ENCODE measurements at regions of chr11 and their contacts with region 1.

Region 1: DNA sequence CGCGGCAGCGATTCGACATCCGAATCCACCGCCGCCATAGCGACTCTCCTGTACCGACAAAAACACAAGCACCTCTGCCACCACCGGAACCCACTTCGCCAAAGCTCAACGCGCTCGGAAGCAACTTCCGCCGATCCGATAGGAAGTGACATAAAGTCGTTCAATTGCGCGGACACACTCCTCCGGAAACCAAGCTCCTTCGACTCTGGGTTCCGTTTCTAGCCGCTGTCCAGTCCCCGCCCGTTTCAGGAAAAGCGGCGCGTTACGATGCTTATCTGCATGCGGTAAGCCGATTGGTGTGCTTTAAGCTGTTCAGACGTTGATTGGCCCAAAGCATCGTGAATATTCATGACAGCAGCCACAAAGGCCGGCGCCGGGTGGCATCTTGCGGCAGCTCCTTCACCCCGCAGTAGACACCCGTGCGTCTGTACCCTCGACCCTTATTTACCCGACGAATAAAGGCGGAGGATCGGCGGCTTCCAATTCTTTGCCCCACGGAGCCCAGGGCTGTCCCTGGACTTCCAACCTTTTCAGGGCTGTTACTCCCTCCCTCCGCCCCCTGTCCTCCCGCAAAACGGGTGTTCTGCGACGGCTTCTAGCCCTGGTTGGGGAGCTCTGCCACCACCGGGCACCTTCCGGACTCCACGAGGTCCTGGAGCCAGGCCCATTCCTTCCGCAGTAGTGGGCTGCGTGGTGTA is at the start of gene TUT1:
- DNase-seq: peak; percentile 99
- ATAC-seq: peak; percentile 92
- H3K4me3 Mint-ChIP-seq: peak within 1 kb of the TSS; percentile 99
- H3K27ac Mint-ChIP-seq: peak within 1 kb of the TSS; percentile 90
- H3K4me1 Mint-ChIP-seq: peaks cover 51% of the 10 kb centered on the region
- H3K27me3 Mint-ChIP-seq: no peaks in the 10 kb centered on the region
- total RNA-seq, gene TUT1: 24.7 to 29.6 TPM

Region 2: GRCh38 chr11:62431171-62431901 is 160.3 kb before region 1 on chr11:
- CTCF ChIA-PET with region 1: no interaction called
- DNase-seq: no peak
- ATAC-seq: no peak
- H3K4me3 Mint-ChIP-seq: no peak overlapping the region
- H3K27ac Mint-ChIP-seq: no peak overlapping the region
- H3K4me1 Mint-ChIP-seq: peaks cover 80% of the 10 kb centered on the region
- H3K27me3 Mint-ChIP-seq: no peaks in the 10 kb centered on the region

Region 3: GRCh38 chr11:62461740-62462507 is 129.7 kb before region 1 on chr11:
- CTCF ChIA-PET with region 1: no interaction called
- DNase-seq: no peak
- ATAC-seq: no peak
- H3K4me3 Mint-ChIP-seq: no peak overlapping the region
- H3K27ac Mint-ChIP-seq: no peak overlapping the region
- H3K4me1 Mint-ChIP-seq: peaks cover 12% of the 10 kb centered on the region
- H3K27me3 Mint-ChIP-seq: no peaks in the 10 kb centered on the region

Region 4: DNA sequence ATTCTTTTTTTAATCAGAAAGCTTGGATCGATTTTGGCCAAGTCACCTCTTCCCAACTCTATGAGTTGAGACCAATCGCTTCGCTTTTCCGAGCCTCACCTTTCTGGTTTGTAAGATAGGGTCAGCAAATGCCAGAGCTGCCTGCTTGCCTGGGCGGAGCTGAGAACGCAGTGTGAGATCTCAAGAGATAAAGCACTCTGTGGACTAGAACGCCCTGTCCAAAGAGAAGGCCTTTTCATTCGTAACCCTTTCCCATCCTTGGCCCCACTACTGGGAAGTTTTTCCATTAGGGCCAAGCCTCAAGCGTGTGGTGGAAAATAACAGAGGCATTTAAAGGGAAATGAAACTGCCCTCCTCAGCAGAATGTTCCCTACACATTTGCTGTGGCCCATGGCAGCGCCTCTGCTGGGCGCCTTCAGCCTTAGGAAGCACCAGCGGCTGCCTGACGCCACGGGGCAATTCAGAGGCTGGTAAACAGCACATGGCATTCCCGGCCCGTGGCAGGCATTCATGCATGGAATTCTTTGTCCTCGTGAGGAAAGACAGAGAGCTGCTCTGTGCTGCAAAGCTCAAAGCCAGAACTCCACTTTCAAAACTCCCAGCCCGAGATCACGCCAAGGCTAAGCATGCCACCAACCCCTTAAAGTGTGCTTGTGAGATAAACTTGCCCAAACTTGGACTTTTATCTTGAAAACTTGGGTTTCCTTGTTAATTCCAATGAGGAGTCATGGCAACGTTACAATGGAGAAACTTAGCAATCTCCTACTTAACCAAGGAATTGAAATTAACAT is 83.1 kb before region 1 on chr11:
- CTCF ChIA-PET with region 1: no interaction called
- DNase-seq: no peak
- ATAC-seq: no peak
- H3K4me3 Mint-ChIP-seq: no peak overlapping the region
- H3K27ac Mint-ChIP-seq: no peak overlapping the region
- H3K4me1 Mint-ChIP-seq: peaks cover 4% of the 10 kb centered on the region
- H3K27me3 Mint-ChIP-seq: no peaks in the 10 kb centered on the region

Region 5: DNA sequence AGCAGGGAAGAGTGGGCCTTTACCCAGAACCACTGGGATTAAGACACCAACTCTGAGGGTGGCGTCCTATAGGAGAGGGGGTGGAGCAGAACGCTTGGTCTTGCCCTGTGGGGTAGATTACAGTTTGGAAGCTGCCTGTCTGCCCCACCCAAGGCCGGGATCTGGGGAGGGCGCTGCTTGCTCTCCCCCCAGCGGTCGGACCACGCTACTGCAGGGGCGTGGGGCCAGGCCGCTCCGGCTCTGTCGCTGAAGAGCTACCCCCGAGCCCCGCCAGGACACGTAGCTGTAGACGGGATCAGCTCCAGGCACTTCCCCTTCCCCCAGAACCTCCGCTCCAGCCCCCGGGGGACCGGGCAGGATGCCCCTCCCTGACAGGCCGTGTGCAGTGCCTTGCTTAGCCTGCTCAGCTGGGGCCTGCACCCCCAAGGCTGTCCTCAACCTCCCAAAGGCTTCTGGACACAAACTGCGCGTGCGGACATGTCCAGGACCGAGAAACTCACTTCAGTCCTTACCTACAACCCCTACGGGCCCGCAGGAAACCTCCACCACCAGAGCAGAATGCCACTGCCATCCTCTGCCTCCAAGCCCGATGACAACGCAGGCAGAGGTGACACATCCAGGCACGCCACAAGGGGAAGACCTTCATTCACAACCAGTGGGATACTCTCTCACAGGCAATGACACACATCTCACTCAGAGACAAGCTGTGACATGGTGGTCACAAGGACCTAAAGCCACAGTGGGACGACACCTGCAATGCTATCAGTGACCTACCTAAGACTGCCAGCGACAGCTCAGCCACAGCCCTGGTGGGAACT is 48.6 kb before region 1 on chr11:
- CTCF ChIA-PET with region 1: interaction called, 18 read pairs
- DNase-seq: peak; percentile 89
- ATAC-seq: peak; percentile 37
- H3K4me3 Mint-ChIP-seq: peak overlapping the region; percentile 98
- H3K27ac Mint-ChIP-seq: peak overlapping the region; percentile 89
- H3K4me1 Mint-ChIP-seq: peaks cover 70% of the 10 kb centered on the region
- H3K27me3 Mint-ChIP-seq: peaks cover 6% of the 10 kb centered on the region

Region 6: GRCh38 chr11:62573592-62574362 is 17.8 kb before region 1 on chr11 and contains the start of gene EEF1G:
- CTCF ChIA-PET with region 1: interaction called, 28 read pairs
- DNase-seq: peak; percentile 100
- ATAC-seq: peak; percentile 94
- H3K4me3 Mint-ChIP-seq: peak within 1 kb of the TSS; percentile 94
- H3K27ac Mint-ChIP-seq: peak within 1 kb of the TSS; percentile 89
- H3K4me1 Mint-ChIP-seq: peaks cover 51% of the 10 kb centered on the region
- H3K27me3 Mint-ChIP-seq: no peaks in the 10 kb centered on the region
- total RNA-seq, gene EEF1G: 878 to 1,201 TPM

Region 7: DNA sequence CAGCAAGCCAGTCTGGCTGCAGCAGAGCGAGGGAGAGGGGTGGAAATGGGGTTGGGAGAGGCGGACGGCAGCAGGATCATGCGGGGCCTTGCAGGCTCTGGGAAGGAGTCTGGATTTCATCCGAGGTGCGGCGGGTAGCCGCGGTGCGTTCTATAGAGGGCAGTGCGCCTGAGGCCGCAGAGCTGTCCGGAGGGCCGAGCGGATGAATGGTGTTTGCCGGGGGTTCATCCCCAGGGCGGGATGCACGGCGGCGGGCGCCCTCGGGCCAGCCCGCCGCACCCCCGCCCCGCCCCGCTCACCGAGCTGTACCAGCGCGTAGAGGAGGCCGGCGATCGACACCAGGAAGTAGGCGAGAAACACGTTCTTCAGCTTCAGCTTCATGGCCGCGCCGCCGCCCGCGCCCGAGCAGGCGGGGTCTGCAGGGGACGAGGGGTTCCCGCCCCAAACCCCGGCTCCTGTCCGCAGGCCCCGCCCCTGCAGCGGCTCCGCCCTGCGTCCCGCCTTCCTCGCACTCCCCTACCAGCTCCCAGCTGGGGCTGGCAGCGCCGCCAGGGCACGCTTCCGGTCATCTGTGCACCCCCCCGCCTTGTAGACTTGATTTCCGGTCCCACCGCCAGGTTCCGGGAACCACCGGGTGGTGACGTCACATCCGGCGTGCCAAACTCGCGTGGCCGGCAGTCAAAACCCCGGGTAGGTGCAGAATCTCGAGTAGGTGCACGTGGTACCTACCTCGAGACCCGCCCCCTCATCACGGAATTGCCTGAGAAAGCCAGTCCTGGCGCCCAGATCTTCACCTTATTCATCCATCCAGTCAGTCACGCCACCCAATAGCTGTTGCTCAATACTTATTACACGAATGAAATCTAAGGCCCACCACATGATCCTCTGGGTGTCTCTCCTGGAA is 30.2 kb after region 1 on chr11 and contains the start of gene B3GAT3:
- CTCF ChIA-PET with region 1: interaction called, 39 read pairs
- DNase-seq: peak; percentile 98
- ATAC-seq: peak; percentile 93
- H3K4me3 Mint-ChIP-seq: peak within 1 kb of the TSS; percentile 90
- H3K27ac Mint-ChIP-seq: peak within 1 kb of the TSS; percentile 96
- H3K4me1 Mint-ChIP-seq: peaks cover 19% of the 10 kb centered on the region
- H3K27me3 Mint-ChIP-seq: no peaks in the 10 kb centered on the region
- total RNA-seq, gene B3GAT3: 64.5 to 69.7 TPM

Region 8: DNA sequence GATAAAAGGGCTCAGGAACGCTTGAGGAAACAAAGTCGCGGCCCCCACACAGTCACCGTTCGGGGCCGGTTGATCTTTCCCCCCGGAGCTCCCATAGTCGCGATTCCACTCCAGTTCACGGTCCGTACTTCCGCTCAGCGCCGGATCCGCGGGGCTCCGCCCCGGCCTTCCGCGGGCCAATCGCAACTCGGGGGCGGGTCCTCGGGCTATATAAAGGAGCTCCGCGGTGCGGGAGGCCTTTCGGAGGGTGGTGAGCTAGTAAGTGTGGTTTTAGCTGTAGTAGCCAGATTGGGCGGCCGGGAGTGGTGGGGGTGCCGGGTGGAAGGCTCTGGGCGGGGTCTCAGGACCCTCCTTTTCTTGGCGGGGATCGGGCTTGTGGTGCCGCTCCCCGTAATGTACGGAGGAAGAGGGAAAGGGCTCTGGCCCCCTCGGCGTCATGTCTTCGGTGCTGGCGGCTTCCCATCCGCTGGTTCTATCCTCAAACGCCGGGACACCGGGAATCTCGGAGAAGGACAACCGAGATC is 73.5 kb after region 1 on chr11 and contains the starts of genes C11orf98 and CSKMT:
- CTCF ChIA-PET with region 1: interaction called, 50 read pairs
- DNase-seq: peak; percentile 97
- ATAC-seq: peak; percentile 91
- H3K4me3 Mint-ChIP-seq: peak within 1 kb of the TSS; percentile 97
- H3K27ac Mint-ChIP-seq: peak within 1 kb of the TSS; percentile 95
- H3K4me1 Mint-ChIP-seq: peaks cover 40% of the 10 kb centered on the region
- H3K27me3 Mint-ChIP-seq: no peaks in the 10 kb centered on the region
- total RNA-seq, gene C11orf98: 130 to 131 TPM
- total RNA-seq, gene CSKMT: 23.7 to 31.0 TPM

Region 9: GRCh38 chr11:62694455-62695167 is 103.0 kb after region 1 on chr11:
- CTCF ChIA-PET with region 1: interaction called, 24 read pairs
- DNase-seq: peak; percentile 85
- ATAC-seq: peak; percentile 88
- H3K4me3 Mint-ChIP-seq: no peak overlapping the region
- H3K27ac Mint-ChIP-seq: no peak overlapping the region
- H3K4me1 Mint-ChIP-seq: peaks cover 5% of the 10 kb centered on the region
- H3K27me3 Mint-ChIP-seq: no peaks in the 10 kb centered on the region

Measured in activated CD8-positive, alpha-beta memory T cell treated with anti-CD3 and anti-CD28 coated beads, Interleukin-2, amount 10 ng/mL, durations not matched to agents 7 days and 5 days (primary cell).